Right ventricle myocardium inferior (tissue), 1 donor: ENCODE measurements at regions of chr16 and their contacts with region 1.

Region 1: GRCh38 chr16:66977341-66978113 is 10.9 kb upstream of the CES4A start:
- DNase-seq: peak; percentile 94
- ATAC-seq: peak; percentile 96

Region 2: DNA sequence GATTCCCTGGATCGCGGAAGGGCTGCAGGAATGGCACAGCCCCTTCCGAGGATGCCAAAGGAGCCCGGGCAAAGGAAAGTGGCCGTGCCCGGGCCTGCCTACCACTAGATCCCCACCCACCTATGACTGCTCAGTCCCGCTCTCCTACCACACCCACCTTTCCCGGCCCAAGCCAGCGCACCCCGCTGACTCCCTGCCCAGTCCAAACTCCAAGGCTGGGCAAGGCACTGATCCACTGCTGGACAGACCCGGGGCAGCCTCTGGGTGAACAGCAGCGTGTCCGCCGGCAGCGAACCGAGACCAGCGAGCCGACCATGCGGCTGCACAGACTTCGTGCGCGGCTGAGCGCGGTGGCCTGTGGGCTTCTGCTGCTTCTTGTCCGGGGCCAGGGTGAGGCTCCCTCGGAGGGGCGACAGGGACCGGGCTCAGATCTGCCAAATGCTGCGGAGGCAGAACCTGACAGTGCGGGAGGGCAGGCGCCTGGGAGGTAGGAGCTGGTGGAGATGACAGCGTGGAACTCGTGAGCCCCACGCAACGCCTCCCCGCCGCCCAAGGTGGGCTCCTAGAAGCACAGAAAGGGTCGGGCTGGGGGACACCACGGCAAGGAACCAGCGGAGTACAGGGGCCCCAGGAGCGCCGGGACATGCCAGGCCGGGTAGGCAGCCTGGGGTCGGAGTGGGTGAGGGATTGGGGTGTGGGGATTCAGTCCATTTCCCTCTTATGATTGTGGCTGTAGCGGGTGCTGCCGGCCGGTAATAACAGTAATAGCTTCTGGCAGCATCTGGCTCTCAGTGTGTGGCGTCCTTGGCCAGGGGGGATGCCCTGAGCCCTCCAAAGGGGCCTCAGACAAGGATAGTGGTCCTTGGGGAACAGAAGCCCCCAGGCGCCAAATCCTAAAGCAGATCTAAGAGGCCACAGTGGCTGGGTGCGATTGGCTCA is 41.9 kb before region 1 on chr16 and contains the start of gene CES2:
- intact Hi-C with region 1: no loop called
- DNase-seq: peak; percentile 71
- ATAC-seq: peak; percentile 79
- total RNA-seq, gene CES2: 126 TPM

Region 3: DNA sequence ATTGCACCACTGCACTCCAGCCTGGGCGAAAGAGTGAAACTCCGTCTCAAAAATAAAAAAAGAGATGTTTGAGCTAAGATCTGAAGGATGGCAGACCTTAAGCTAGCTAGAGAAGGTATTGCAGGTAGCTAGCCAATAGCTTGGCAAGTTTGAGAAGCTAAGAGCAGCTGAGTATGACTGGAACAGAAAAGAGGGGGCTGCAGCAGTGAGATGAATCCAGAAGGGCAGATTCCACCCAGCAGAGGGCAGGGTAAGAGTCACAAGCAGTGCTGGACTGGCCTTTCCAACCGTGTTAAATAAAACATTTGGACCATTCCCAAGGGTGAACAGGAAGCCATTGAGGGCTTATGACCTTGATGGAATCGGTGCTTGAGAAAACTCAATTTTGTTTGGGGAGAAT is 126.5 kb after region 1 on chr16:
- intact Hi-C with region 1: loop called (anchors 5 kb)
- DNase-seq: no peak
- ATAC-seq: peak; percentile 69

Region 4: DNA sequence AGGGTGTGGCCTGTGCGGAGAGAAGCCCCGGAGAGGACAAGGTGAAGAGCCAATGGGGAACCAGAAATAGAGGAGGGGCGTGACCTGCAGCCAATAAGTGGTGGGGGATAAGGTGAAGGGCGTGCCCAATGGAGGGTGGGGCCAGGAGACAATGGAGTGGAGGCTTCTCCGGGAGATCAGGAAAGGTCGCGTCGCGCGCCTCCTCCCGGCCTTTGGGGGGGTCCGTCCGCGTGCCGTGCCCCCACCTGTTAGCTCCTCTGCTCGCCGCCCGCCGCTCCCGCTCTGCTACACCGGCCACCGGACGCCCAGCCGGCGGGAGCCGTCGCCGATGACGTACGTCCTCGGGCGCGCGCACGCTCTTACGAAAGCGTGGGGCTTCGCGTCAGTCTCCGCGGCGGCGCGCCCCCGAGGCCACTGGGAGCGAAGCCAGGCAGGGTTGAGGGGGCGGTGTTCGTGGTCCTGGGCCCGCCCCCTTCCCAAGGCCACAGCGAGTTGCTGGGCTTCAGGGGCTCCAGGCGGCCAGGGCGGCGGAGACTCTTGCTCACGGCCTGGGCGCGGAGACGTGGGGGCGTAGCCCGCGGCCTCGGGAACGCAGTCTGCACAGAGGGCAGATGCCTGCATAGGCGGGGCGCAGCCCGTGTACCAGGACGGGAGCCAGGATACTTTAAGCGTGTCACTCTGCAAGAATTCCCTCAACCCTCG is 206.3 kb after region 1 on chr16 and contains the start of gene MATCAP1:
- intact Hi-C with region 1: loop called (anchors 1 kb)
- DNase-seq: peak; percentile 97
- ATAC-seq: peak; percentile 96
- total RNA-seq, gene MATCAP1: 9.8 TPM

Region 5: GRCh38 chr16:67279296-67280089 is 302.0 kb after region 1 on chr16 and contains the start of gene PLEKHG4:
- intact Hi-C with region 1: loop called (anchors 10 kb)
- DNase-seq: peak; percentile 90
- ATAC-seq: peak; percentile 90
- total RNA-seq, gene PLEKHG4: 1.1 TPM